Calu3 (cell line): ENCODE measurements at regions of chr2 and their contacts with region 1.

Region 1: DNA sequence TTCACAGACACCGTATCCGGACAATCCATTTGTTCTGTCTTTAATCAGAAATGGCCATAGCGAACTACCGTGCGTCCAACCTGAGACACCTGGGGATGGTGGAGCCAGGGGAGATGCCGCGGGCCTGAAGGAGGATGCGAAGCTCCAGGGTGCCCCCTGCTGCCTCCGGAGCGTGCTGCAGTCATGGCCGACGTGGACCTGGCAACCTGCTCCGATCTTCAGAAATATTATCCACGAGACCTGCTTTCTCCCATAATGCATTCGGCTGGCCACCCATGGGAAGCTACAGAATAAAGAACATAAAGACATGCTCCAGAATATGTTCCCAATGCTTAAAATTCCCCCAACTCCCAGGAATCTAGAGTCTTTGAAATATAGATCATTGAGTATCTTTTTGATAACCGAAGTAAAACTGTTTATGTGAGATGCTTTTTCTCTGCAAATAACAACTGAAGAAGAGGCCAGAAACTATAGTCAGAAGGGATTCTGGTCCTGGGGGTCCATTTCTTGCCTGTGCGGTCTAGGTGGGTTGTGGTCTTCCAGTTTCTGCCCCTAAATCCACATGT is 30.7 kb upstream of the SLC66A3 start:
- DNase-seq: peak; percentile 88
- H3K4me3 Mint-ChIP-seq: no peak overlapping the region
- H3K27ac Mint-ChIP-seq: no peak overlapping the region
- H3K4me1 Mint-ChIP-seq: peaks cover 18% of the 10 kb centered on the region
- H3K27me3 Mint-ChIP-seq: peaks cover 26% of the 10 kb centered on the region
- CTCF ChIP-seq: peak; percentile 89

Region 2: GRCh38 chr2:10717613-10718012 is 407.0 kb before region 1 on chr2:
- CTCF ChIA-PET with region 1: no interaction called
- intact Hi-C with region 1: loop called (anchors 10 kb)
- DNase-seq: peak; percentile 32
- H3K4me3 Mint-ChIP-seq: no peak overlapping the region
- H3K27ac Mint-ChIP-seq: no peak overlapping the region
- H3K4me1 Mint-ChIP-seq: peaks cover 17% of the 10 kb centered on the region
- H3K27me3 Mint-ChIP-seq: peaks cover 44% of the 10 kb centered on the region
- CTCF ChIP-seq: no peak

Region 3: DNA sequence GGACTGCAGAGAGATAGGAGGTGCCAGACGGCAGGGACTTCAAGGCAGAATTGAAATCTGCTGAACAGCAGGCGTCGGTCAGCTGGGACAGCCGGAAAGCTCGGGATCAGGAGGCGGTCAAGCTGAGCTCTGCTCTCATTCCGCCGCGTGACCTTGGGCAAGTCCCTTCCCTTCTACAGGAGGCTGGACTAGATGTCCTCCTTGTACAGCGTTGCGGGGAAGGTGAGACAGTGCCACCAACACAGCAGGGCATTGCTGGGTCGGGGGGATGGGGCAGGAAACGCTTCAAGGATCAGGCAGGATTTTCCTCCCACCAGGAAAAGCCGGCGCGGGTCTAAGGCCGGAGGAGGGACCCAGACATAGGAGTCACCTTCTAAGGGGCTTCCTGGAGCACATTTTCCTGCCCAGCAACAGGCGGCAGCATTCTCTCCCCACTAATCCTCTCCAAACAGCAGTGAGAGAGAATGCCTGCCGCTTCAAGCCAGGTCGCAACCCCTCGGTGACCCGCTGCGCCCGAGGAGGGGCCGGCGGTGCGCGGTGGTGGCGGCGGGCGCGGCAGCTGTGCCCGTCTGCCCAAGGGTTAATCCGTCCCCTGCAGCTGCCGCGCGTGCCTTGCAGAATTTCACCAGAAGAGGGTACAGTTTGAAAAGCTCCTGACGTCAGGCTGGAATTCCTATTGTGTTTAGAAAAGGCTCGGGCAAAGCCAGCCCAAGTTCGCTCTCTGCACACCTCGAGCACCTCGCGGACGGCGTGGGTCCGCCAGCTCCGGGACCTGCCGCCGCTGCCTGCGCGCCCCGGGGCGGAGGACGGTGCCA is 213.1 kb before region 1 on chr2 and contains the start of gene KCNF1:
- CTCF ChIA-PET with region 1: interaction called, 3 read pairs
- intact Hi-C with region 1: loop called (anchors 10 kb)
- DNase-seq: peak; percentile 35
- H3K4me3 Mint-ChIP-seq: peak within 1 kb of the TSS; percentile 6
- H3K27ac Mint-ChIP-seq: no peak within 1 kb of the TSS
- H3K4me1 Mint-ChIP-seq: no peaks in the 10 kb centered on the region
- H3K27me3 Mint-ChIP-seq: peaks cover 97% of the 10 kb centered on the region
- CTCF ChIP-seq: peak; percentile 26
- total RNA-seq, gene KCNF1: not detected in 2 replicates

Region 4: GRCh38 chr2:11305958-11306357 is 181.4 kb after region 1 on chr2:
- CTCF ChIA-PET with region 1: no interaction called
- intact Hi-C with region 1: no loop called
- DNase-seq: no peak
- H3K4me3 Mint-ChIP-seq: no peak overlapping the region
- H3K27ac Mint-ChIP-seq: no peak overlapping the region
- H3K4me1 Mint-ChIP-seq: peaks cover 8% of the 10 kb centered on the region
- H3K27me3 Mint-ChIP-seq: no peaks in the 10 kb centered on the region
- CTCF ChIP-seq: no peak